Ovary (tissue), 10 donors: ENCODE measurements at regions of chr4 and their contacts with region 1.

Region 1: GRCh38 chr4:77819843-77820648 is 878 bp upstream of the CNOT6L start:
- DNase-seq: peak; percentile 90 to 94 (median 93)
- H3K4me3 ChIP-seq: peak overlapping the region; percentile 90
- H3K27ac ChIP-seq: peak overlapping the region; percentile 98
- H3K4me1 ChIP-seq: peaks cover 9% of the 10 kb centered on the region
- H3K27me3 ChIP-seq: no peaks in the 10 kb centered on the region
- CTCF ChIP-seq: no peak
- EP300 ChIP-seq: no peak
- POLR2A ChIP-seq: peak; percentile 66

Region 2: DNA sequence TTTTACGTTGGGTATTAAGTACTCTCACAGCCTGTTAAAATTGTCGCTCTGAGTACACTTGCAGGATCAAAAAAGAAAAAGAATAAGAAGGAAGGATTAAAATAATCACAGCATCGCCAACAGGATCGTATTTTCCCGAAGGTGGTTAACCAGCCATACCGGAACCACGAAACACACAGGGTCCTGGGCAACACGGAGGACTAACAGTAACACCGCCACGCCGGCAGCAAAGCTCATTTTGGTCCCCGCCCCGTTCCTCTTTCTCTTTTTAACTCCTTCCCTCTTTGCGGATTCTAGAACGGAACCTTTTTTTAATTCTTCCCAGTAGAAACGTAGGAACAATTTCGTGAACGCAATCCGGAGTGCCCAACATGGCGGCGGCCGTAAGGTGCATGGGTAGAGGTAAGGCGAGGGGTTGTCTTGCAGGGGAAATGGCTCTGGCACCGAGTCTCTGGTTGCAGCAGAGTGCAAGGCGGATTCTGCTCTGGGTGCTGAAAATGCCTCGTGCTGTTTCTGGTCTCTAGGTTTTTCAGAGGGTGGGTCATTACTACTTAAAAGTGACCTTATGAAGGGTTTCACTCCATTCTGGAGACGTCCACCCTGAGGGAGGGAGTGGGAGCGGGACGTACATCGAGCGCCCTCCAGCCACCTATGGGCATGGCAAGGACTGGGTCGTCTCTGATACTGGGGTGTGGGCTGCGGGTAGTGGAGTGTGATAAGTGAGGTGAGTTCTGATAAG is 42.6 kb after region 1 on chr4 and contains the start of gene MRPL1:
- intact Hi-C with region 1: loop called in 2 of 4 experiments (anchors 2 kb)
- DNase-seq: peak; percentile 82 to 90 (median 88)
- H3K4me3 ChIP-seq: peak within 1 kb of the TSS; percentile 79
- H3K27ac ChIP-seq: peak within 1 kb of the TSS; percentile 68 to 85
- H3K4me1 ChIP-seq: peaks cover 3% of the 10 kb centered on the region
- H3K27me3 ChIP-seq: no peaks in the 10 kb centered on the region
- CTCF ChIP-seq: peak in 1 of 3 donors; percentile 7
- EP300 ChIP-seq: no peak
- POLR2A ChIP-seq: peak; percentile 42
- total RNA-seq, gene MRPL1: 22.1 to 31.4 (median 25.4) TPM

Region 3: GRCh38 chr4:79331126-79331876 is 1511.3 kb after region 1 on chr4:
- intact Hi-C with region 1: no loop called
- DNase-seq: no peak
- H3K4me3 ChIP-seq: no peak overlapping the region
- H3K27ac ChIP-seq: no peak overlapping the region
- H3K4me1 ChIP-seq: no peaks in the 10 kb centered on the region
- H3K27me3 ChIP-seq: no peaks in the 10 kb centered on the region
- CTCF ChIP-seq: no peak
- EP300 ChIP-seq: no peak
- POLR2A ChIP-seq: no peak